Mammary epithelial cell (primary cell): ENCODE measurements at regions of chr14 and their contacts with region 1.

Region 1: DNA sequence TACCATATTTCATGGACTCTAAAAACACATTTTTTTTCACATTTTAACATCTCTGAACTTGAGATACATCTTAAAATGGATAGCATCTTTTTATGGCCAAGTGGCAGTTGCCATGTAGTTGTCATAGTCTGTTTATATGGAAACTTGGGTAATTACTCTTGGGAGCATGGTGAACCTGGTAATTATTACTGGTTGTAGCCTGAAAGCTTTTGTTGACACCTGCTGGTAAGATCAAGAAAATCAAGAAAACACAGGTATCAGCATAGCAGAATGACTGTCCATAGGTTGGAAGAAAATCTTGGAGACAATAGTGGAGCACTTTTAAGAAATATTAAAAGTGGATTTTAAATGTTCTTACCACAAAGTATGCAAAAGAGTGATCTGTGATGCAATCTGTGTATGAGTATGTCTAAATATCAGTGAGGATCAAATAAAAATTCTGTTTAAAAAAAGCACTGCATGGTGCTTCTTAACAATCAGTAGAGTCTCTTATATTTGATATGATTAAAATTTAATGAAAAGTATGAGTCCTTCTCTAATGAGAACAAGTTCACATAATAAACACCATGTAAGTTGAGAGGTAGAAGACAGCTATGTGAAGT is 44.2 kb downstream of the TTC8 start:
- DNase-seq: peak; percentile 39
- H3K4me3 ChIP-seq: no peak overlapping the region
- H3K27ac ChIP-seq: no peak overlapping the region
- H3K4me1 ChIP-seq: no peaks in the 10 kb centered on the region
- H3K27me3 ChIP-seq: no peaks in the 10 kb centered on the region
- CTCF ChIP-seq: peak; percentile 50 to 69

Region 2: GRCh38 chr14:88492272-88493089 is 376.2 kb before region 1 on chr14:
- CTCF ChIA-PET with region 1: no interaction called
- dilution Hi-C with region 1: no loop called
- in situ Hi-C with region 1: no loop called
- intact Hi-C with region 1: loop called (anchors 10 kb)
- DNase-seq: peak; percentile 49
- H3K4me3 ChIP-seq: no peak overlapping the region
- H3K27ac ChIP-seq: no peak overlapping the region
- H3K4me1 ChIP-seq: peaks cover 13% of the 10 kb centered on the region
- H3K27me3 ChIP-seq: no peaks in the 10 kb centered on the region
- CTCF ChIP-seq: peak; percentile 84 to 88

Region 3: GRCh38 chr14:88792572-88793258 is 75.9 kb before region 1 on chr14 and contains the start of gene EML5:
- CTCF ChIA-PET with region 1: interaction called, 3 read pairs
- dilution Hi-C with region 1: no loop called
- in situ Hi-C with region 1: no loop called
- intact Hi-C with region 1: loop called (anchors 1 kb)
- DNase-seq: peak; percentile 84
- H3K4me3 ChIP-seq: peak within 1 kb of the TSS; percentile 68 to 80 (median 71)
- H3K27ac ChIP-seq: peak within 1 kb of the TSS; percentile 25
- H3K4me1 ChIP-seq: peaks cover 5% of the 10 kb centered on the region
- H3K27me3 ChIP-seq: no peaks in the 10 kb centered on the region
- CTCF ChIP-seq: peak; percentile 17 to 44
- total RNA-seq, gene EML5: 0.33 to 2.7 TPM

Region 4: GRCh38 chr14:88824314-88825077 is 44.2 kb before region 1 on chr14 and contains the start of gene TTC8:
- CTCF ChIA-PET with region 1: no interaction called
- dilution Hi-C with region 1: no loop called
- in situ Hi-C with region 1: no loop called
- intact Hi-C with region 1: loop called (anchors 2 kb)
- DNase-seq: peak; percentile 85
- H3K4me3 ChIP-seq: peak within 1 kb of the TSS; percentile 53 to 86 (median 66)
- H3K27ac ChIP-seq: peak within 1 kb of the TSS; percentile 90
- H3K4me1 ChIP-seq: peaks cover 11% of the 10 kb centered on the region
- H3K27me3 ChIP-seq: no peaks in the 10 kb centered on the region
- CTCF ChIP-seq: no peak
- total RNA-seq, gene TTC8: 29.9 to 37.0 TPM

Region 5: GRCh38 chr14:88937706-88938105 is 69.0 kb after region 1 on chr14:
- CTCF ChIA-PET with region 1: no interaction called
- dilution Hi-C with region 1: no loop called
- in situ Hi-C with region 1: no loop called
- intact Hi-C with region 1: no loop called
- DNase-seq: no peak
- H3K4me3 ChIP-seq: no peak overlapping the region
- H3K27ac ChIP-seq: no peak overlapping the region
- H3K4me1 ChIP-seq: no peaks in the 10 kb centered on the region
- H3K27me3 ChIP-seq: no peaks in the 10 kb centered on the region
- CTCF ChIP-seq: no peak

Region 6: DNA sequence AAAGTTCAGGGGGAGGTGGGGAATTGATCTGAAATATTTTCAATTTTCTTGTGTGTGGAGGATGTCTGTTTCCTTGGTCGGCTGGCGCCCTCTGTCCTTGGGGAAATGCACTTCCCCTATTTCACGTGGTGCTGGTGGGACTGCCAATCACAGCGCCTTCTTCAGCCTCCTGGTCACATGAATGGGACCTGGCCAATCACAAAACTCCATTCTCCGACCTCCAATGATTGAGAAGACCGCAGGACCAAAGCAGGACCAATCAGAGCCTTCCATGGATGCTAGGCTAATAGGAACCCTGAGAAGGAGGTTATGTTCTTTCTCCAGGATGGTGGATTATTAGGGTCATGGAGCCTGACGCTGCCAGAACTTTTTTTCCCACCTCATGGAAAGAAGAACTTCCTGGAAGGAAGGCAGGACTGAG is 144.4 kb after region 1 on chr14:
- CTCF ChIA-PET with region 1: no interaction called
- dilution Hi-C with region 1: no loop called
- in situ Hi-C with region 1: no loop called
- intact Hi-C with region 1: loop called (anchors 2 kb)
- DNase-seq: no peak
- H3K4me3 ChIP-seq: no peak overlapping the region
- H3K27ac ChIP-seq: no peak overlapping the region
- H3K4me1 ChIP-seq: no peaks in the 10 kb centered on the region
- H3K27me3 ChIP-seq: no peaks in the 10 kb centered on the region
- CTCF ChIP-seq: peak; percentile 15 to 48